Left cardiac atrium (tissue), 4 donors: ENCODE measurements at regions of chr4 and their contacts with region 1.

Region 1: DNA sequence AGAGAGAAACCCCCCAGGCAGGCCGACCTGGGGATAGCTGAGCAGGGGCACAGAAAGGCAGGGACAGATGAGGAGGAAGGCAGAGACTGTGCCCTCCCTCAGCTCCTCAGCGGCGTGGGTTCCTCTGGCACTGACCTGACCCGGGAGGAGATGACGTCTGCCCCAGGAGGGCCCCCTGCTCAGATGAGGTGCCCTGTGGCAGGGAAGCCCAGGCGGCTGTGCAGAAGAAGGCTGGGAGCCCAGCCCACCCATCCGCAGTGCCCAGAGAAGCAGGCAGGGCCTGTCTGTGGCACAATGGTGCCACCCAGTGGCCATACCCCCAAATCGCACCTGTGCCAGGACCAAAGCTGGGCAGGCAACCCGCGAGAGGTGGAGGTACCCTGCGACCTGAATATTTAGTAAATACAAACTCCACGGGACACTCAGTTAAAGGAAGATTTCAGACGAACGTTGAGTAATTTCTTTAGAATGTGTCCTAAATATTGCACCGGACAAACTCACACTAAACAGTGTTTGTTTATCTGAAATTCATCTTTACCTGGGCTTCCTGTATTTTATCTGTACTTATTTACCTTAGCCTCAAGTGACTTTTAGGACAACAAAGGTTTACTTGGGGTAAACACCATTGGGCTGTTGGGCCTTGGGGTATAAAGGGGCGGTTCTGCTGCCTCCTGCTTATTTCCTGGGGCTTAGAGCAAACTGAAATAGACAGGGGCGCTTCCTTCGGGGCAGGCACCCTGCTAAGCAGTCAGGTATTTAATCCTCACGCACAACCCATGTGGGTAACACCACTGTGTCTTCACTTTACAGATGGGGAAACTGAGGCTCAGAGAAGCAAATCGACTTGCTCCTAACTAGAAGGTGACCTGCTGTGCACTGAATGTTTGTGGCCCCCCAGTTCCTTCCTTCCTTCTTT is 46.5 kb upstream of the HMX1 start:
- DNase-seq: peak; percentile 54
- ATAC-seq: peak; percentile 75 to 76

Region 2: GRCh38 chr4:8607603-8608481 is 310.3 kb before region 1 on chr4:
- intact Hi-C with region 1: loop called (anchors 10 kb)
- DNase-seq: no peak
- ATAC-seq: no peak

Region 3: DNA sequence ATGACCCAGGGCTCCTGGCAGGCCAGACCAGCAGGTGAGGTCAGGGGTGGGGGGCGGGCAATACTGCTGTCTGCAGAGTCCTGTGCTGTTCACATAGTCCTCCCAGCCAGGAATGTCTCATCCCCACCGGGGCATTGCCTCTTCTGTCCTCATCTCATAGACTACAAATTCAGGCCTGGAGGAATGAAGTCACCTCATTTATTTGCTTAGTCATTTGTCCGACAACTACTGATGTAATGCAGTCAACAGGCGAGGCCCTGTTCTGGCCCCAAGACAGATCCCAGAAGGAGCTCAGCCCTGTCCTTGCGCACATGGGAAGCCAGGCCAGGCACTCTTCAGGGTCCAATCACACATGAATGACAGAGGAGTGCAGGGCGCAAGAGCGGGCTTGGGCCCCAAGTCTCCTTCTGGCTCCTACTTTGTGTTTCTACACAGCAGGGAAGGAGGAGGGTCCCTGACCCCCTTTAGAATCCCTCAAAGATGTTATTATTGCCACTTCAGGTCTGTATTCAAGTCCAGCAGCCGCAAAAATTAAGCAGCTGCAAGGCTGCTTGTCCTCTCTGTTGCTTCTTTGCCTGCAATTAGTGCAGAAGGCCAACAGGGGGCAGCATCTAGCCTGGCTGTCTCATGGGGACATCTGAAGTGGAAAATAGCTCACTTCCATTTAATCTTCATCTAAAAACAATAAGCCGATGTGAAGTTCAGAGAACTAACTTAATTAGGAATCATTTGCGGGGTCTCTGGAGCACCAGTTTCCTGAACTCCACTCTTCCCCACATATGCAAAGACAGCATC is 31.3 kb before region 1 on chr4:
- intact Hi-C with region 1: no loop called
- DNase-seq: no peak
- ATAC-seq: no peak